CD4-positive, alpha-beta T cell (primary cell): ENCODE measurements at regions of chr15 and their contacts with region 1.

Region 1: DNA sequence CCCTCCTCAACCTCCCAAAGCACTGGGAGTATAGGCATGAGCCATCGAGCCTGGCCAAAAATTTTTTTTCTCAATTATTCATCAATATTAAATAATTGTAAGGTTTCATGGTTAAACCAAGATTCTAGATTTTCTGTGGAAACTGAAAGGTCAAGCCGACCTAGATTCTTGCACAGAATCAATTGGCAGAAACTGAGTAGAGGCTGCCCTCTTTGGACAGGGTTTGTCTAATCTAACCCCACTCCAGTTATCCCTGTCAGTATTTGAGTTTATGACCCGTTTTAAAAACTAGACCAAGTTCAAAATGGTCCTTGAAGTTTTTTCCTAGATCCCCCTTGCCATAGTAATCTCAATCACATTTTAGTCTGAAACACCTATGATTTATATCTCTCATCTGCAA is 8.6 kb upstream of the ADAM10 start:
- DNase-seq: peak in 1 of 14 experiments; percentile 19
- ATAC-seq: no peak
- H3K4me3 ChIP-seq: no peak overlapping the region
- H3K4me3 Mint-ChIP-seq: no peak overlapping the region
- H3K27ac ChIP-seq: no peak overlapping the region
- H3K27ac Mint-ChIP-seq: no peak overlapping the region
- H3K4me1 ChIP-seq: no peaks in the 10 kb centered on the region
- H3K4me1 Mint-ChIP-seq: no peaks in the 10 kb centered on the region
- H3K27me3 ChIP-seq: no peaks in the 10 kb centered on the region
- H3K27me3 Mint-ChIP-seq: no peaks in the 10 kb centered on the region
- CTCF ChIP-seq: no peak

Region 2: DNA sequence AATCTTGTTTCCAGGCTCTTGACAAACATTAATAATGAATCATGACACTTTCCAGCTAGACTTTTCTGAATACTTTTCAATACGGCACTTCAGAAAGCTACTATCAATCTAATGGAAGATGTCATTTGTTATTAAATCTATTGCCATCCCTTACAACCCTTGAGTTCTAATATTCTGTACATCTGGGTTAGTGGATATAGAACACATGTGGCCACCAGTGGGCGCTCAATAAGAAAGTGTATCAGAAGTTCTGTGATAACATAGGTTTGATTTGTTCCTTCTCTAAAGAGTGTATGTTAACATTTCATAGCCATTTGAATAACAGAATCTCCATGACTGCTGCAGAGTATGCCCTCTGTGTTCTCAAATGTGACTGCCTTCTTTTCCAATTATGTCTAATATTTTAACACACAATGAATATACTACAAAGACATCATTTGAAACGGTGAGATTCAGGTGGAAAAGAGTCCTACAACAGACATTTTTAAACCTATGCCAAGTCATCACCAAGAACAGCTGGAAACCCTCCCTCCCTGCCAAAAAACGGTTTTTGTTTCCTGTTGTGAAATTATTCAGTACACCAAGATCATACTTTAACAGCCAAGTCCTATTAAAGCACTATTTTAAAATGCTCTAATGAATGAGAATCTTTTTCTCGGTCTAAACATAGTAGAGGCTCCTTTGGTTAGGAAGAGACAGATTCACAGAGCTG is 714.8 kb before region 1 on chr15:
- CTCF ChIA-PET with region 1: no interaction called
- POLR2A ChIA-PET with region 1: no interaction called
- intact Hi-C with region 1: loop called in 1 of 2 experiments (anchors 10 kb)
- DNase-seq: peak in 9 of 14 experiments; percentile 13 to 56 (median 37)
- ATAC-seq: no peak
- H3K4me3 ChIP-seq: no peak overlapping the region
- H3K4me3 Mint-ChIP-seq: no peak overlapping the region
- H3K27ac ChIP-seq: no peak overlapping the region
- H3K27ac Mint-ChIP-seq: no peak overlapping the region
- H3K4me1 ChIP-seq: no peaks in the 10 kb centered on the region
- H3K4me1 Mint-ChIP-seq: no peaks in the 10 kb centered on the region
- H3K27me3 ChIP-seq: peaks cover 2 to 18% of the 10 kb centered on the region in 2 experiments
- H3K27me3 Mint-ChIP-seq: peaks cover 65% of the 10 kb centered on the region
- CTCF ChIP-seq: peak; percentile 63

Region 3: GRCh38 chr15:58227706-58228543 is 530.2 kb before region 1 on chr15:
- CTCF ChIA-PET with region 1: interaction called, 6 read pairs
- POLR2A ChIA-PET with region 1: interaction called, 3 read pairs
- intact Hi-C with region 1: loop called (anchors 2 kb)
- DNase-seq: peak; percentile 41 to 80 (median 56)
- ATAC-seq: peak; percentile 43
- H3K4me3 ChIP-seq: no peak overlapping the region
- H3K4me3 Mint-ChIP-seq: no peak overlapping the region
- H3K27ac ChIP-seq: no peak overlapping the region
- H3K27ac Mint-ChIP-seq: no peak overlapping the region
- H3K4me1 ChIP-seq: peaks cover 5% of the 10 kb centered on the region
- H3K4me1 Mint-ChIP-seq: peaks cover 15% of the 10 kb centered on the region
- H3K27me3 ChIP-seq: no peaks in the 10 kb centered on the region
- H3K27me3 Mint-ChIP-seq: no peaks in the 10 kb centered on the region
- CTCF ChIP-seq: peak; percentile 87

Region 4: GRCh38 chr15:58269455-58270414 is 488.4 kb before region 1 on chr15:
- CTCF ChIA-PET with region 1: no interaction called
- POLR2A ChIA-PET with region 1: no interaction called
- intact Hi-C with region 1: loop called in 1 of 2 experiments (anchors 5 kb)
- DNase-seq: peak in 8 of 14 experiments; percentile 4 to 66 (median 20)
- ATAC-seq: peak; percentile 43
- H3K4me3 ChIP-seq: no peak overlapping the region
- H3K4me3 Mint-ChIP-seq: no peak overlapping the region
- H3K27ac ChIP-seq: no peak overlapping the region
- H3K27ac Mint-ChIP-seq: no peak overlapping the region
- H3K4me1 ChIP-seq: peaks cover 3% of the 10 kb centered on the region
- H3K4me1 Mint-ChIP-seq: peaks cover 6% of the 10 kb centered on the region
- H3K27me3 ChIP-seq: no peaks in the 10 kb centered on the region
- H3K27me3 Mint-ChIP-seq: no peaks in the 10 kb centered on the region
- CTCF ChIP-seq: peak; percentile 58

Region 5: DNA sequence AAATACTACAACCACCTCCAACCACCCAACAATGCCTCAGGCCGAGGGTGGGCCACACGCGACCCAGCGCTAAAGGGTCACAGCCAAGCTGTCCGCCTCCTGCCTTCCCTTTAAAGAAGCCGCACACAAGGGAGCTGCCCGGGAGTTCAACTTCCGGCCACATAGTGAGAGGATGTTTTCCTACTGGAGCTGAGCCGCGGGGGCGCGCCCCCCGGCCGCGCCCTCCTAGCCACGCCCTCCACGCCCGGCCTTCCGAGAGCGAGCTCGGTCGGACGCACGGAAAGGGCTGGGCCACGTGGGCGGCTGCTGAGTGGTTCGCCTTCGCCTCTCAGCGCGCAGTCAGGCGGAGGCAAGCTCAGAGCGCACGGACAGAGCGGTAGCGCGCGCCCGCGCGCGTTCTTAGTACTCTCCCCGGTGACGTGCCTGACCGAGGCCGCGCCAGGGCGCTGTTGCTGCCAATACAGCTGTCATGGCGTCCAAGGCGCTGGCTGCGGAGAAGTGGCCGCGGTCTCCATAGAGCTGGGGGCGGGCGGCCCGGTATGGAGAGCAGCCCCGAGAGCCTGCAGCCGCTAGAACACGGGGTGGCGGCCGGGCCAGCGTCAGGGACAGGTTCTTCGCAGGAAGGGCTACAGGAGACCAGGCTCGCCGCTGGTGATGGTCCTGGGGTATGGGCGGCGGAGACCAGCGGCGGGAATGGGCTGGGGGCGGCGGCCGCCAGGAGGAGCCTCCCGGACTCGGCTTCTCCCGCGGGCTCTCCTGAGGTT is 12.9 kb after region 1 on chr15 and contains the start of gene MINDY2:
- CTCF ChIA-PET with region 1: interaction called, 10 read pairs
- POLR2A ChIA-PET with region 1: interaction called, 11 read pairs
- intact Hi-C with region 1: loop called in 1 of 2 experiments (anchors 2 kb)
- DNase-seq: peak; percentile 86 to 97 (median 92)
- ATAC-seq: peak; percentile 93
- H3K4me3 ChIP-seq: peak within 1 kb of the TSS; percentile 86
- H3K4me3 Mint-ChIP-seq: no peak within 1 kb of the TSS
- H3K27ac ChIP-seq: peak within 1 kb of the TSS; percentile 74 to 83
- H3K27ac Mint-ChIP-seq: peak within 1 kb of the TSS; percentile 89
- H3K4me1 ChIP-seq: peaks cover 33% of the 10 kb centered on the region
- H3K4me1 Mint-ChIP-seq: peaks cover 20% of the 10 kb centered on the region
- H3K27me3 ChIP-seq: no peaks in the 10 kb centered on the region
- H3K27me3 Mint-ChIP-seq: no peaks in the 10 kb centered on the region
- CTCF ChIP-seq: no peak
- total RNA-seq, gene MINDY2: 7.5 to 7.7 TPM

Region 6: DNA sequence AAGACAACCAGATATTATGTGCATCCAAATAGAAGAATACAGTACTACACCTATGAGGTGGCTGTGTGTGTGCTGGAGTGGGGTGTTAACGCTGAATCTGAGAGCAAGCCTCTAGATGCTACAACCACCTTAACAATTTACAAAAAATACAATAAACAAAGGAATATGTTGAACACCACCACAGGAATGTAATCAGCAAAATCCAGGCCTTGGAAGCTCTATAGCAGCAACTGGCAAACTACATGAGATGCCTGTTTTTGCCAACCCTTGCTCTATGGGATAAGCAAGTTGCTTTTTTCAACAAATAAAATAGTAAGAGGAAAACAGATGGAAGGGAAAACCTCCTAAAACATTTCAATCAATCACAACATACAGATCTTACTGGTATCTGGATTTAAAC is 151.5 kb after region 1 on chr15:
- CTCF ChIA-PET with region 1: no interaction called
- POLR2A ChIA-PET with region 1: no interaction called
- intact Hi-C with region 1: no loop called
- DNase-seq: no peak
- ATAC-seq: no peak
- H3K4me3 ChIP-seq: no peak overlapping the region
- H3K4me3 Mint-ChIP-seq: no peak overlapping the region
- H3K27ac ChIP-seq: no peak overlapping the region
- H3K27ac Mint-ChIP-seq: peak overlapping the region; percentile 34
- H3K4me1 ChIP-seq: peaks cover 7% of the 10 kb centered on the region
- H3K4me1 Mint-ChIP-seq: peaks cover 54% of the 10 kb centered on the region
- H3K27me3 ChIP-seq: no peaks in the 10 kb centered on the region
- H3K27me3 Mint-ChIP-seq: no peaks in the 10 kb centered on the region
- CTCF ChIP-seq: no peak